ENCODE measurements at regions of chr1 and their contacts with region 1.

Region 1: DNA sequence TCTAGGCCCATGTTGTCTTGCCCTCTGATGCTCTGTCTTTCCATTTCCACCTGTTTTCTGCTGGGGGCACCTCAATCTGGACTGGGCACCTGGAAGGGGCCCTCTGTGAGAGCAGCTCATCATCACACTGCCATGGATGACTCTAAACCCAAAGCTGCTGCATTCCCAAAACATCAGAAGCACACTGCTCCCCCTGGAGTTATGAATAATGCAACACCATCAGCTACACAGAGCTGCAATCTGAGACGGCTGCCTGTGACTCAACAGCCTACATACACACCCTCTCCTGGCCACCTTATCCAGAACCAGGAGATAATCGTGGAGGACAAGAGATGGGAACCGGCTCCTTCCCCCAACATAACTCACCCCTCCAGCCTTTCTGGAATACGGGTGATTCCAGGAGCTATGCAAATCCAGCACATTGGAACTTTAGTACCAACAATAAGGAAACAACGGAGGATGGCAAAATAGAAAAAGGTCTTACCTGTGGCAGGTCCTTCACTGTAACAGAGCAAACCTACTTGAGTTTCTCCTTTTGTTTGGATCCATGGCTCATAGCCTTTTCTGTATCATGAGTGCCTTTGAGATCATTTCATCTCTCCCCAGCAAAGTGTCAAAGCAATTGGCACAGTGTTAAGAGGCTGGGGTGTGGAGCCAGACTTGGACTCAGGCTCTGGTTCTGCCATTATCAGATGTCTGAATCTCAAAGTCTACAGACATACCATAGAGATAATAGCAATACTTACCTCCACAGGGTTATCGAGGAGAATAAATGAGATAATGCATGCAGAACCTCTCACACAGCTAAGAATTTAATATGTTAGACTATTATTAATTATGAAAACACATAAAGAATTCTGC is 29.3 kb downstream of the AK2 start:
- DNase-seq: peak; percentile 69 to 84
- H3K4me3 ChIP-seq: no peak overlapping the region
- H3K27ac ChIP-seq: peak overlapping the region; percentile 71
- H3K4me1 ChIP-seq: peaks cover 57% of the 10 kb centered on the region
- H3K27me3 ChIP-seq: no peaks in the 10 kb centered on the region
- CTCF ChIP-seq: peak; percentile 77

Region 2: GRCh38 chr1:32933742-32934322 is 73.6 kb before region 1 on chr1:
- CTCF ChIA-PET with region 1: interaction called, 4 read pairs
- POLR2A ChIA-PET with region 1: no interaction called
- intact Hi-C with region 1: loop called (anchors 1 kb)
- DNase-seq: peak; percentile 42 to 52
- H3K4me3 ChIP-seq: no peak overlapping the region
- H3K27ac ChIP-seq: peak overlapping the region; percentile 31
- H3K4me1 ChIP-seq: peaks cover 18% of the 10 kb centered on the region
- H3K27me3 ChIP-seq: no peaks in the 10 kb centered on the region
- CTCF ChIP-seq: peak; percentile 44; the same call in 1 of the 2 replicates

Region 3: DNA sequence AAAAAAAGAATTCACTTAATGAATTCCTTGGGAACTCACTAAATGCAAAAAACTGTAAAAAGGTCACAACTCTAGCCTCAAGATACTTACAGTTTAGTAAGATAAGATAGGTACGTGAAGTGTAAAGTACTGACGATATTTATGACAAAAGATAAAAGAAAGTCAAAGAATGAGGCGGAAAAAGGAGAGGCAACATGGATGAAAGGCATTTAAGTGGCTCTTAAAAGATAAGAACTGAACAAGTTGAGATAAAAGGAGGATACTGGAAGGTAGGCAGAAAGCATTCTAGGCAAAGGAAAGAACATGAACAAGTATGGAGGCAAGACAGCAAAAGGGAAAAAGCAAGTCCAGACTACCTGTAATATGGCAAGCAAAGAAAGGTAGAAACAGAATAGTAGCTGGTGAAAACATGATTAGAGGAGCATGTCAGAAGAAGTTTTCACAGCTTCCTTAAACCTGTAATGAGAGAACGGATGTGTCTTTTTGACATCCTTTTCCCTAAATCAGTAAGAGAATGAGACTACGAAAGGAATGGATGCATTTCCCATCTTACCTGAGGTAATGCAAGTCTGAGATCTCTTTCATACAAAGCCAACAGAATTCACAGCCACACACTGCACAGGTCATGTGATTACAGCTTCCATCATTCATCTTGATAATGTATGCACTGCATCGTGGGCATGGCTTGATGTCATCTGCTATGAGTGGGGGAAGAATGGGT is 59.6 kb before region 1 on chr1:
- CTCF ChIA-PET with region 1: no interaction called
- POLR2A ChIA-PET with region 1: no interaction called
- intact Hi-C with region 1: no loop called
- DNase-seq: no peak
- H3K4me3 ChIP-seq: no peak overlapping the region
- H3K27ac ChIP-seq: no peak overlapping the region
- H3K4me1 ChIP-seq: peaks cover 9% of the 10 kb centered on the region; the same call in 1 of the 2 replicates
- H3K27me3 ChIP-seq: no peaks in the 10 kb centered on the region
- CTCF ChIP-seq: no peak

Region 4: GRCh38 chr1:32963746-32964460 is 43.5 kb before region 1 on chr1:
- CTCF ChIA-PET with region 1: interaction called, 6 read pairs
- POLR2A ChIA-PET with region 1: interaction called, 19 read pairs
- intact Hi-C with region 1: loop called (anchors 1 kb)
- DNase-seq: peak; percentile 58 to 74
- H3K4me3 ChIP-seq: peak overlapping the region; percentile 97
- H3K27ac ChIP-seq: 0 out of 2 replicates have a peak overlapping the region, but pooled peaks have one; percentile 18
- H3K4me1 ChIP-seq: peaks cover 36% of the 10 kb centered on the region
- H3K27me3 ChIP-seq: no peaks in the 10 kb centered on the region
- CTCF ChIP-seq: no peak

Region 5: DNA sequence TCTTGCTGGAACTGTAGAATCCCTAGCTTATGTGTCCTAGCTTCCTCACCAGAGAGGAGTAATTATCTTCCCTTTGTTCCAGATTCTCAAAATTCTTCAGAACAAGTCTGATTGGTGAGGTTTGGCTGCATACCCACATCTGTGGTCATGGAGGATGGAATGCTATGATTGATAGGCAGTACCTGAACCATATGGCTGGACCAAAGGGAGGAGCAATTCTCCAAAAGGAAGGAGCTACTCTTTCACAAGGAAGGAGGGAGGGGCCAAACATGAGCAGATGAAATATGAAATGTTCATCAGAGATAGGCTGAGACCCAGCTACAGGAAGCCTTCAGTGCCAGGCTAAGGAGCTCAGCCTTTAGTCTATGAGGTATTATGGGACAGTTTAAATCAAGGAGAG is 37.9 kb before region 1 on chr1:
- CTCF ChIA-PET with region 1: interaction called, 6 read pairs
- POLR2A ChIA-PET with region 1: interaction called, 3 read pairs
- intact Hi-C with region 1: loop called (anchors 2 kb)
- DNase-seq: peak; percentile 48 to 92
- H3K4me3 ChIP-seq: no peak overlapping the region
- H3K27ac ChIP-seq: peak overlapping the region; percentile 51
- H3K4me1 ChIP-seq: peaks cover 34% of the 10 kb centered on the region
- H3K27me3 ChIP-seq: no peaks in the 10 kb centered on the region
- CTCF ChIP-seq: no peak

Region 6: DNA sequence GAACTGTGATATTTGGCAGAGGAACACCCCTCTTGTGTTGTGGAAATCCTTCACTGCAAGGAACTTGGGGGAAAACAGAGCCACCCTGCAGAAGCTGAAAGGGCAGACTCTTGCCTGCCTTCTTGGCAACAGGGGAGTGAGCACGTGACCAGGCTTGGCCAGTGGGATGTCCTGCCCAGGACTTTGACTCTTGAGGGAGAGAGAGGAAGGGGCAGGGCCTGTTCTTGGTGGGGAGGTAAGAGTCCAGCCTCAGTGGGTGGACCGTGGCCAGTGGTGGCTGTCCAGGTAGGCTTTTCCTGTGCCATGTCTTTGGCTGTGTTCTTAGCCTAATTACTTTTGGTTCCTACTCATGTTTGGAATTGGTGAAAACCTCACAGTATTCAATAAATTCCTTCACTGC is 37.8 kb after region 1 on chr1:
- CTCF ChIA-PET with region 1: no interaction called
- POLR2A ChIA-PET with region 1: interaction called, 11 read pairs
- intact Hi-C with region 1: no loop called
- DNase-seq: no peak
- H3K4me3 ChIP-seq: no peak overlapping the region
- H3K27ac ChIP-seq: no peak overlapping the region
- H3K4me1 ChIP-seq: peaks cover 28% of the 10 kb centered on the region
- H3K27me3 ChIP-seq: no peaks in the 10 kb centered on the region
- CTCF ChIP-seq: no peak

Region 7: GRCh38 chr1:33055210-33056008 is 48.0 kb after region 1 on chr1:
- CTCF ChIA-PET with region 1: interaction called, 4 read pairs
- POLR2A ChIA-PET with region 1: no interaction called
- intact Hi-C with region 1: loop called (anchors 1 kb)
- DNase-seq: peak; percentile 60 to 85
- H3K4me3 ChIP-seq: no peak overlapping the region; the same call in 1 of the 2 replicates
- H3K27ac ChIP-seq: peak overlapping the region; percentile 60
- H3K4me1 ChIP-seq: peaks cover 29% of the 10 kb centered on the region
- H3K27me3 ChIP-seq: no peaks in the 10 kb centered on the region
- CTCF ChIP-seq: peak; percentile 85

Region 8: DNA sequence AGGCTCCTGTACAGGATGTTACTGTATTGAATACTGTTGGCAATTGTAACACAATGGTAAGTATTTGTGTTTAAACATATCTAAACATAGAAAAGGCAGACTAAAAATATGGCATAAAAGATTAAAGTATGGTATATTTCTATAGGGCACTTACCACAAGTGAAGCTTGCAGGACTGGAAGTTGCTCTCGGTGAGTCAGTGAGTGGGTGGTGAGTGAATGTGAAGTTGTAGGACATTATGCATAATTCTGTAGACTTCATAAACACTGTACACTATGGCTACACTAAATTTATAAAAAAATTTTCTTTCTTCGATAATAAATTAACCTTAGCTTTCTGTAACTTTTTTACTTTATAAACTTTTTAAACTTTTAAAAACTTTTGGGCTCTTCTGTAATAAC is 188.1 kb after region 1 on chr1:
- CTCF ChIA-PET with region 1: no interaction called
- POLR2A ChIA-PET with region 1: no interaction called
- intact Hi-C with region 1: no loop called
- DNase-seq: no peak
- H3K4me3 ChIP-seq: no peak overlapping the region
- H3K27ac ChIP-seq: no peak overlapping the region
- H3K4me1 ChIP-seq: no peaks in the 10 kb centered on the region
- H3K27me3 ChIP-seq: no peaks in the 10 kb centered on the region
- CTCF ChIP-seq: no peak

Measured in PC-9 (cell line).